ENCODE measurements at regions of chr10 and their contacts with region 1.

Region 1: DNA sequence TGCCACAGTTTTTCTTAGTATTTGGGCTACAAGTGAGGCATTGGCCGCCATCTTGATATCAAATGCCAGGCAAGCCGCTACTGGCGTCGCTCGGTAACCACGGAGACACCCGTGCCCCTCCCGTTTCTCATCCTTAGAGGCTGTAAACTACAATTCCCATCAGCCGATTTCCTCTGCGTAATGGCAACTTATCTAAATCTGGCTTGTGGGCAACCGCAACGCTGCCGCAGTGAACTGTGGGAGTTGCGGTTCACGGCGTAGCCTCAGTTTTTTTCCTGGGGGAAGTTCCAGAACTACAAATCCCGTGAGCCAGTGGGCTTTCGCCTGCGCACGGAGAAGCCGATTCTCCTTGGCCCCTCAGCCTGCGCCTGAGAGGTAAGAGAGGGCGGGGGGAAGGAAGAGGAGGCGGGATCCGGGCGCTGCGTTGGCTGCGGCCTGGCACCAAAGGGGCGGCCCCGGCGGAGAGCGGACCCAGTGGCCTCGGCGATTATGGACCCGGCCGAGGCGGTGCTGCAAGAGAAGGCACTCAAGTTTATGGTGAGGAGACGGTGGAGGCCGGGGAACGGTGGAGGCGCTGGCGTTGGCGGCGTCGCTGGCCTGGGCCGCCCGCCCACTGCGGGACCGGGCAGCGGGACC is at the start of gene BTRC:
- DNase-seq: peak; percentile 98
- H3K4me3 ChIP-seq: peak within 1 kb of the TSS; percentile 65 to 88 (median 76)
- H3K27ac ChIP-seq: peak within 1 kb of the TSS; percentile 86 to 91 (median 88)
- H3K4me1 ChIP-seq: peaks cover 0 to 20% (median 18%) of the 10 kb centered on the region in 4 donors
- H3K27me3 ChIP-seq: no peaks in the 10 kb centered on the region
- CTCF ChIP-seq: no peak
- EP300 ChIP-seq: peak in 1 of 4 donors; percentile 63
- POLR2A ChIP-seq: peak; percentile 34 to 43
- total RNA-seq, gene BTRC: 9.4 to 32.6 (median 11.4) TPM

Region 2: DNA sequence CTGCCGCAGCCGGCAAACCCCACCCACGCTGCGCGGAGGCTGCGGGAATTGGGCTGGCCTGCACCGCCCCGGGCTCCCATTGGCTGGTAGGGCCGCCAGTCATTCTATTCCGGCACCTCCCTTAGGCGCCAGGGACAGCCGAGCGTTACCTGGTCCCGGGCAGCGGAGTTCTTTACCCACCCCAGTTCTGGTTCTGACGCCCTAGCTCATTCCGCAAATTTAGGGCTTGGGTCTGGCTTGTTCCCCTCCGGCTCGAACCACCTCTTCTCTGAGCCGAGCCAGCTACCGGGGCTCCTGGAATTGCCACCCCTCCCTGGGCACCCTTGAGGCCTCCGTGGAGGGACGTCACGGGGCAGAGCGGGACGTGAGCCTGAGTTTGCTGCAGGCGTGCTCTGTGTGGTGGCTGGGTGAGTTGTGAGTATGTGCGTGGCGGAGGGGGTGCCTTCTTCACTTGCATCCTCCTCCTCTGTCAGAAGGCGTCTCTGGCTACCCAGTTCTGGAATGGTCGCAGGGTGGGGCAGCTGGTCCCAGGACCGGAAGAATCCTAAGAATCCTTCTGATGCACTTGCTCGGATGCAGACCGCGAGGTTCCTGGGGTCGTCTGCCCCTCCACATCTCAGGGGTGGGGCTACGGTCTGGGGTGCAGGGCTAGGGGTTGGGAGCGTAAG is 322.5 kb before region 1 on chr10 and contains the starts of genes PDZD7 and SFXN3:
- intact Hi-C with region 1: loop called (anchors 10 kb)
- DNase-seq: peak; percentile 98
- H3K4me3 ChIP-seq: peak within 1 kb of the TSS; percentile 66 to 85 (median 76)
- H3K27ac ChIP-seq: peak within 1 kb of the TSS; percentile 91 to 98 (median 96)
- H3K4me1 ChIP-seq: peaks cover 0 to 28% (median 20%) of the 10 kb centered on the region in 4 donors
- H3K27me3 ChIP-seq: peaks cover 0 to 10% (median 0%) of the 10 kb centered on the region in 3 donors
- CTCF ChIP-seq: no peak
- EP300 ChIP-seq: no peak
- POLR2A ChIP-seq: peak; percentile 39 to 76
- total RNA-seq, gene PDZD7: 0.16 to 2.4 (median 1.3) TPM
- total RNA-seq, gene SFXN3: 17.5 to 57.1 (median 43.5) TPM

Region 3: GRCh38 chr10:101230183-101230917 is 123.5 kb before region 1 on chr10:
- intact Hi-C with region 1: loop called (anchors 5 kb)
- DNase-seq: no peak
- H3K4me3 ChIP-seq: no peak overlapping the region
- H3K27ac ChIP-seq: no peak overlapping the region
- H3K4me1 ChIP-seq: peaks cover 0 to 50% (median 45%) of the 10 kb centered on the region in 4 donors
- H3K27me3 ChIP-seq: peaks cover 79 to 100% (median 98%) of the 10 kb centered on the region in 3 donors
- CTCF ChIP-seq: no peak
- EP300 ChIP-seq: no peak
- POLR2A ChIP-seq: no peak

Region 4: GRCh38 chr10:101587725-101588653 is 234.2 kb after region 1 on chr10 and contains the starts of genes DPCD and POLL:
- intact Hi-C with region 1: loop called (anchors 5 kb)
- DNase-seq: peak; percentile 99
- H3K4me3 ChIP-seq: peak within 1 kb of the TSS; percentile 84 to 96 (median 88)
- H3K27ac ChIP-seq: peak within 1 kb of the TSS; percentile 72 to 79 (median 76)
- H3K4me1 ChIP-seq: peaks cover 0 to 28% (median 20%) of the 10 kb centered on the region in 4 donors
- H3K27me3 ChIP-seq: no peaks in the 10 kb centered on the region
- CTCF ChIP-seq: no peak
- EP300 ChIP-seq: no peak
- POLR2A ChIP-seq: no peak
- total RNA-seq, gene DPCD: 18.5 to 80.2 (median 40.0) TPM
- total RNA-seq, gene POLL: 25.3 to 39.6 (median 33.2) TPM

Measured in sigmoid colon (tissue), 7 donors.